HepG2 (cell line): ENCODE measurements at regions of chr2 and their contacts with region 1.

Region 1: DNA sequence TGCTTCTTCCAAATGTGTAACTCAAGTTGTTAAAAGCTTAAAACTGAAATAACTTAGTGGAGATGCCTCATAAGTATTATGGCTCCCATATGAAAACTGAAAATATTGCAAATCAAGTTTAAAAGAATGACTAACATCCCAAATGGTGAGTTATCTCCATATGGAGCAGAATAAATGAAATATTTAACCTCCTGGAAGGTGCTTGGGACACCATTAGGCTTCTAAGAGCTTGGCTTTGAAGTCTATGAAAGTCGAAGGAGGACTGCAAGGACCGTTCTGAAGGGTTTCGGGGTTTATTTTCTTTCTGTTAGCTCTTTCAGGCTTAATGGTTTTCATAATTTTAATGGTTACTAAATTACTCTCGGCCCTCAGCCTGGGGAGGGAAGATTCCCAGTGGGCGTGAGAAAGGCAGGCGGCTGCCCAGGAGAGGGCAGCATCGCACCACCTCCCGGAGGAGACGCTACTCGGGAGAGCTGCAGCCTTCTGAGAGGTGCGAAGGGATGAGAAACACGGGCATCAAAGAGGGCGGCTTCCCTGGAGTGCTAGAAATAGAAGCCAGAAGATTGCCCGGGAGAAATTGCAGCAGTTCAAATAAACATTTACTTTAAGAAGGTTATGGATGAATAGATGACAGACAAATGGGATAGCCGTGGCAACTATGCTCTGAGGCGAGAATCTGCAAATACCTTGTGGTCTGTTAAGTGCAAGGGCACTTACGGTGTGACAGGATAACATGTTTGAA is 43.1 kb downstream of the MAP3K19 start:
- DNase-seq: peak; percentile 54
- ATAC-seq: peak; percentile 100
- H3K4me3 ChIP-seq: no peak overlapping the region
- H3K27ac ChIP-seq: no peak overlapping the region
- H3K4me1 ChIP-seq: peaks cover 6% of the 10 kb centered on the region
- H3K27me3 ChIP-seq: peaks cover 0 to 10% of the 10 kb centered on the region in 2 experiments; a peak in 2 of 5 replicates
- CTCF ChIP-seq: peak; percentile 98
- EP300 ChIP-seq: no peak
- POLR2A ChIP-seq: no peak
- RAD21 ChIP-seq: peak; percentile 97

Region 2: GRCh38 chr2:135043345-135043744 is 39.2 kb after region 1 on chr2:
- CTCF ChIA-PET with region 1: no interaction called
- POLR2A ChIA-PET with region 1: no interaction called
- in situ Hi-C with region 1: no loop called
- intact Hi-C with region 1: no loop called
- DNase-seq: no peak
- ATAC-seq: no peak; the same call in 2 of the 3 replicates
- H3K4me3 ChIP-seq: no peak overlapping the region
- H3K27ac ChIP-seq: no peak overlapping the region
- H3K4me1 ChIP-seq: peaks cover 14% of the 10 kb centered on the region
- H3K27me3 ChIP-seq: no peaks in the 10 kb centered on the region; a peak in 1 of 5 replicates
- CTCF ChIP-seq: peak; percentile 34; the same call in 1 of the 2 replicates
- EP300 ChIP-seq: no peak
- POLR2A ChIP-seq: no peak
- RAD21 ChIP-seq: no peak

Region 3: DNA sequence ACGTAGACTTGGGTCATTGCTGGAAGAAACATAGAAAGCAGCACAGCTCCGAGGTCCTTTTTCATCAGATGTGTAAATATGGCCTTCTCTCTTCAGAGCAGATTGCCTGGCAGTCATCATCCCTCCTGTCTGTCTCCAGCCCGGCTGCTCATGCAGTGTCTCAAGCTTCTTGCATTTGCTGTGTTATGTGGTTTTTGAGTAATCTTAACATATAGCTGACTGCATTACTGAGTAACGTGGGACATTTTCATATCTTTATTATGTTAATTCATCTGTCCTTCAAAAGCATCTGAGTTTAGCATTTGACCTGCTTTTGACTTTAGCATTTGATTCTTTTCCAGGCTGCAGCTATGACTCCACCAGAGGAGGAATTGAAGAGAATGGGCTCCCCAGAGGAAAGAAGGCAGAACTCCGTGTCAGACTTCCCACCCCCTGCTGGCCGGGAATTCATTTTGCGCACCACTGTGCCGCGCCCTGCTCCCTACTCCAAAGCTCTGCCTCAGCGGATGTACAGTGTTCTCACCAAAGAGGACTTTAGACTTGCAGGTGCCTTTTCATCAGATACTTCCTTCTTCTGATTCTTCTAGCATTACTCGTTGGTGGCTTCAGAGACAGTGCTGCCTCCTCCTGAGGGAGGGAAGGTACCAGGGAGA is 164.2 kb after region 1 on chr2:
- CTCF ChIA-PET with region 1: interaction called, 4 read pairs
- POLR2A ChIA-PET with region 1: no interaction called
- in situ Hi-C with region 1: no loop called
- intact Hi-C with region 1: loop called (anchors 1 kb)
- DNase-seq: no peak
- ATAC-seq: peak; percentile 71
- H3K4me3 ChIP-seq: no peak overlapping the region
- H3K27ac ChIP-seq: no peak overlapping the region
- H3K4me1 ChIP-seq: no peaks in the 10 kb centered on the region
- H3K27me3 ChIP-seq: no peaks in the 10 kb centered on the region
- CTCF ChIP-seq: 0 out of 2 replicates have a peak, but pooled peaks have one; percentile 10
- EP300 ChIP-seq: no peak
- POLR2A ChIP-seq: no peak
- RAD21 ChIP-seq: no peak

Region 4: DNA sequence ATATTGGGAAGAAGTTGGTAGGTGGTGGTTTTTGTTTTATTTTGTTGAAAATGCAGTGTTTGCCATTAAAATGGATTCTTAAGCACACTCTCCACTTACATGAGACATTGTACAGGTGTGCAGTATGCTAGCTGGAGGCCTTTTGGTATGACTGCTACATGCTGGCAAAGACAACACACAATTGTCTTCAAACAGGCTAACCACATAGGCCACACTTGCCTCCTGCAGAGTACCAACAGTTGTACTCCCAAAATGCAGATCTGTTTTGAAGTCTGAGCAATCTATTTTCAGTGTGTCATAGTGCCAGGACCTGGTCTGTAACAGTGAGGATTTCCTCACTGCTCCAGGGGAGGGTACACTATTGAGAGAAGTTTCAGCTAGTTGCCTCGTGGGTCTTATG is 313.2 kb after region 1 on chr2:
- CTCF ChIA-PET with region 1: no interaction called
- POLR2A ChIA-PET with region 1: no interaction called
- in situ Hi-C with region 1: no loop called
- intact Hi-C with region 1: no loop called
- DNase-seq: no peak
- ATAC-seq: no peak; the same call in 2 of the 3 replicates
- H3K4me3 ChIP-seq: no peak overlapping the region
- H3K27ac ChIP-seq: no peak overlapping the region
- H3K4me1 ChIP-seq: no peaks in the 10 kb centered on the region
- H3K27me3 ChIP-seq: no peaks in the 10 kb centered on the region
- CTCF ChIP-seq: no peak
- EP300 ChIP-seq: no peak
- POLR2A ChIP-seq: no peak
- RAD21 ChIP-seq: no peak

Region 5: DNA sequence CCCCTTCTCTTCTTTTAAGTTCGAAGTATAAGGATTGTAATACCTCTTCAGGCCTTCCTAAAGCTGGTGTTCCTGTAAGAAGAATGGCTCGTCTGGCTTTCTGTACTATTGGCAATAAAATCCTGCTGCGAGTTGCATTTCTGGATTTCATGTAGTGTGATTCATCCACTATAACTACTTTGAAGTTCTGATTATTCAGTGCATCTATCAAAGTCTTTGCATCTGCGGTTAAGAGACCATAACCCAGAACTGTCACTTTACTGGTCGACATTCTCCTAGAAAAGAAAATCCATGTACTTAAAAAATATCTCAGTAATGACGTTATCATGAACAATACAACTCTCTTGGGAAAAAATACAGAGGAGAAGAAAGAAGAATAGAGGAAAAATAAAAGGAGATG is 345.8 kb after region 1 on chr2:
- CTCF ChIA-PET with region 1: no interaction called
- POLR2A ChIA-PET with region 1: no interaction called
- in situ Hi-C with region 1: no loop called
- intact Hi-C with region 1: no loop called
- DNase-seq: no peak
- ATAC-seq: no peak
- H3K4me3 ChIP-seq: no peak overlapping the region
- H3K27ac ChIP-seq: no peak overlapping the region
- H3K4me1 ChIP-seq: no peaks in the 10 kb centered on the region
- H3K27me3 ChIP-seq: no peaks in the 10 kb centered on the region
- CTCF ChIP-seq: no peak
- EP300 ChIP-seq: no peak
- POLR2A ChIP-seq: no peak
- RAD21 ChIP-seq: no peak

Region 6: GRCh38 chr2:135531231-135532228 is 527.4 kb after region 1 on chr2 and contains the start of gene R3HDM1:
- CTCF ChIA-PET with region 1: no interaction called
- POLR2A ChIA-PET with region 1: no interaction called
- in situ Hi-C with region 1: no loop called
- intact Hi-C with region 1: loop called (anchors 10 kb)
- DNase-seq: peak; percentile 100
- ATAC-seq: peak; percentile 89
- H3K4me3 ChIP-seq: peak within 1 kb of the TSS; percentile 76 to 94 (median 87)
- H3K27ac ChIP-seq: peak within 1 kb of the TSS; percentile 95
- H3K4me1 ChIP-seq: peaks cover 57% of the 10 kb centered on the region
- H3K27me3 ChIP-seq: no peaks in the 10 kb centered on the region; a peak in 1 of 5 replicates
- CTCF ChIP-seq: peak; percentile 73
- EP300 ChIP-seq: no peak
- POLR2A ChIP-seq: peak; percentile 64 to 69
- RAD21 ChIP-seq: peak; percentile 81
- total RNA-seq, gene R3HDM1: 15.7 and 20.3 TPM in 2 replicates

Region 7: GRCh38 chr2:135701442-135701841 is 697.3 kb after region 1 on chr2:
- CTCF ChIA-PET with region 1: no interaction called
- POLR2A ChIA-PET with region 1: no interaction called
- in situ Hi-C with region 1: loop called (anchors 5 kb)
- intact Hi-C with region 1: no loop called
- DNase-seq: no peak
- ATAC-seq: no peak
- H3K4me3 ChIP-seq: no peak overlapping the region
- H3K27ac ChIP-seq: no peak overlapping the region
- H3K4me1 ChIP-seq: no peaks in the 10 kb centered on the region
- H3K27me3 ChIP-seq: no peaks in the 10 kb centered on the region
- CTCF ChIP-seq: no peak
- EP300 ChIP-seq: no peak
- POLR2A ChIP-seq: no peak
- RAD21 ChIP-seq: no peak

Region 8: DNA sequence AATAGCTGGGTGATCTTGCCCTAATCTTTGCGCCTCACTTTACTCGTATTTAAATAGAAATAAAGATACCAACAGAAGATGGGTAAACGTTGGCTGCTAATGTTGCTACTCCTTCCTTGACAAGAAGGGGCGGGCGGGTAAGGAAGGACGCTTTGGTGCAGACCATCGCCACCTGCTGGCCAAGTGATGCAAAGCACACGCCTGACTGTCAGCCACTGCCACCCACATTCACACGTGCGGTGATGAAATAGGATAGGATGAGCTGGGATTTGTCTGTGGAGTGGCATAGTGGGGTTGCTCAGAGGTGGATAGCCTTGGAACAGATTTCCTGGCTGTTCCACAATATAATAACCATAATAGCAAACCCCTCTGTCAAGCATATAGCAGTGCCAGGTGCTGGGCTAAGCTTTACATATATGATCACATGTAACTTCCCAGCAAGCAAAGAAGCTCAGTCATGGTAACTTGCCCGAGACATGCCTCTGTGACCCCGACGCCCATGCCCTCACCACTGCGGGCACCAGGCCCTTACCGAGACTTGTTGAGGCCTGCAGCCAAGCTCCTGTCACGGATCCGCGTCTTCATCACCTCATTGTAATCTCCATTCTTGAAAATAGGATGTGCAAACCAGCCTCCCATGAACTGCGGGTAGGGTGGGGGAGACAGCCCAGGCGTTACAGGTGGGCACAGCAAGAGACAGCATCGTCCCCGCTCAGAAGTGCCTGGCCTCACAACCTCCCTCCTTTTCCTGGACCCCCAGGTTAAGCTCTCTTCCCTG is 793.5 kb after region 1 on chr2:
- CTCF ChIA-PET with region 1: no interaction called
- POLR2A ChIA-PET with region 1: no interaction called
- in situ Hi-C with region 1: loop called (anchors 10 kb)
- intact Hi-C with region 1: loop called (anchors 2 kb)
- DNase-seq: peak; percentile 68
- ATAC-seq: peak; percentile 86
- H3K4me3 ChIP-seq: no peak overlapping the region
- H3K27ac ChIP-seq: no peak overlapping the region
- H3K4me1 ChIP-seq: no peaks in the 10 kb centered on the region
- H3K27me3 ChIP-seq: no peaks in the 10 kb centered on the region
- CTCF ChIP-seq: peak; percentile 94
- EP300 ChIP-seq: no peak
- POLR2A ChIP-seq: no peak
- RAD21 ChIP-seq: peak; percentile 54